ENCODE measurements at regions of chr17 and their contacts with region 1.

Region 1: GRCh38 chr17:9729034-9729650 is 62.2 kb downstream of the DHRS7C start:
- DNase-seq: peak; percentile 78 to 83
- ATAC-seq: peak; percentile 54 to 77; a peak in 4 of 6 replicates
- H3K4me3 ChIP-seq: no peak overlapping the region
- H3K27ac ChIP-seq: peak overlapping the region; percentile 62 to 84
- H3K4me1 ChIP-seq: peaks cover 13% of the 10 kb centered on the region
- CTCF ChIP-seq: peak; percentile 100
- EP300 ChIP-seq: no peak
- POLR2A ChIP-seq: no peak
- RAD21 ChIP-seq: peak; percentile 99 to 100

Region 2: GRCh38 chr17:9575381-9576101 is 153.6 kb before region 1 on chr17 and contains the start of gene STX8:
- CTCF ChIA-PET with region 1: interaction called, 14 read pairs
- POLR2A ChIA-PET with region 1: no interaction called
- DNase-seq: peak; percentile 86 to 94
- ATAC-seq: peak; percentile 89 to 94
- H3K4me3 ChIP-seq: peak within 1 kb of the TSS; percentile 93
- H3K27ac ChIP-seq: peak within 1 kb of the TSS; percentile 88 to 90
- H3K4me1 ChIP-seq: peaks cover 15% of the 10 kb centered on the region
- CTCF ChIP-seq: no peak
- EP300 ChIP-seq: no peak
- POLR2A ChIP-seq: peak; percentile 83
- RAD21 ChIP-seq: 0 out of 5 replicates have a peak, but pooled peaks of 1 of the 2 experiments have one; percentile 16
- polyA plus RNA-seq, gene STX8: 155 and 168 TPM in 2 replicates

Region 3: DNA sequence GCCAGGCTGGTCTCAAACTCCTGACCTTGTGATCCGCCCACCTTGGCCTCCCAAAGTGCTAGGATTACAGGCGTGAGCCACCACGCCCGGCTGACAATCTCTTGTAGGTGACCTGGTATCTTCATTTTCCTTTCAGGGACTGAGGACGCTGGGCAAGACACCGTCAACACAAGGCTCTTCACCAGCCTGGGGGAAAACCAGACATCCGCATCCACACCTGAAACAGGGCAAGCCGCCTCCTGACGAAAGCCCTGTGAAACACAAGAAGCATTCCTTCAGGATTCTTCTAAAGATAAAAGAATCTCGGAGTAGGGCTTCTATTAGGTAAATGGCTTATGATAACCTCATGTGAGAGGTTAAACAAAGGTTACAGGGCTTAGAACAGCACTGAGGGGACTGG is 14.0 kb after region 1 on chr17:
- CTCF ChIA-PET with region 1: interaction called, 13 read pairs
- POLR2A ChIA-PET with region 1: no interaction called
- DNase-seq: no peak
- ATAC-seq: no peak
- H3K4me3 ChIP-seq: no peak overlapping the region
- H3K27ac ChIP-seq: no peak overlapping the region
- H3K4me1 ChIP-seq: no peaks in the 10 kb centered on the region
- CTCF ChIP-seq: no peak
- EP300 ChIP-seq: no peak
- POLR2A ChIP-seq: no peak
- RAD21 ChIP-seq: no peak

Region 4: DNA sequence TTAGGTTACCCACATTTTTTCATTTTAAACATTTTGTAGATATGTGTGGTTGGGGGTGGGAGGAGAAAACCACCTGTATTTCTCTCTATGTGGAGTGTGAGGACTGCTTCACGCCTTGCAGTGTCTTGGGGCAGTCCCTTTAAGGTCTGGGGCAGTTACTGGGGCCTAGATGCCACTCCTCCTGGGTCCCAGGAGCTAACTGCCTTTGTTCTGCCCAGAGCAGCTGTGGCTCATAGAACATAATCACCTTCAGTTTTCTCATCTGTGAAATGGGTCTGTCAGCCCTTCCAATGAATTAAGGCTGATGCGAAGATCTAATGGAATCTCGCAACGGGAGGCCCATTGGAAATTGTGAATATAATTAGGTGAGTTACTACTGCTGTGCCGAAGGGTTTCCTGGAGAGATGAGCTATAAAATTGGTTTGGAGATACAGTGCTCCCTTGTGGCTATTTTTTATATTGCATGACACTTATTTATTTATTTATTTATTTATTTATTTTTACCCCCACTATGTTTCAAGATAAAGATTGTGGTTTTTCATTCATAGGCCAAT is 39.3 kb after region 1 on chr17:
- CTCF ChIA-PET with region 1: interaction called, 22 read pairs
- POLR2A ChIA-PET with region 1: no interaction called
- DNase-seq: peak; percentile 55 to 60
- ATAC-seq: peak in 1 of 2 experiments; percentile 52; a peak in 3 of 6 replicates
- H3K4me3 ChIP-seq: no peak overlapping the region
- H3K27ac ChIP-seq: peak overlapping the region; percentile 43 to 72
- H3K4me1 ChIP-seq: peaks cover 14% of the 10 kb centered on the region; the same call in 2 of the 3 replicates
- CTCF ChIP-seq: peak; percentile 80
- EP300 ChIP-seq: no peak
- POLR2A ChIP-seq: no peak
- RAD21 ChIP-seq: peak; percentile 55 to 74

Region 5: DNA sequence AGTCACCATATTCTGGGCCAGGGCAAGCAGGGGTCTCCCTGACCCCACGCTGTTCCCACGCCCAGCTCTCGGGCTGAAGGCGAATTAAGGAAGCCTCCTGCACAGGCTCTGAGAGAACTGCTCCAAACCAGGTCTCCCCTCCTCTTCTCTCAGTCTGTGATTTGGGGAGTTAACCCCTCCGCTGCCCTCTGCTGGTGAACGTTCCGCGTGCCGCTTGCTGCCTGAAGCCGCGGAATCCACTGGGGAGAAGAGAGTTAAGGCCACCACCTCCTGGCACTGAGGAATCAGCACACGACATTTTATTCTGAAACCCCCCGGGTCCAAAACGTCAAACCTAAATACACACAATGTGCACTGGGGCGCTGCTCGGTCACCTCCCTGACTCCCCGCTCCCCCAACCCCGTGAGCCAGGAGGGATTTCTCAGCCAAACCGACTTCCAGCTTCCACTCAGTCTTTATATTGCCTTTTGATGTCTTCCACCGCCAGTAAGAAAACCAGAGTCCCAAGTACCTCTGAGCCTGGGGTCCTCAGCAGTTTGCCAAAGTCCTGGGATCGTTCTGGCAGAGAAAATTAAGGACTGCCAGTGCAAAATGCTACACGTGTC is 230.3 kb after region 1 on chr17:
- CTCF ChIA-PET with region 1: interaction called, 61 read pairs
- POLR2A ChIA-PET with region 1: no interaction called
- DNase-seq: peak; percentile 74 to 91
- ATAC-seq: peak; percentile 77 to 91
- H3K4me3 ChIP-seq: no peak overlapping the region
- H3K27ac ChIP-seq: peak overlapping the region in 1 of 2 experiments; percentile 26; a peak in 2 of 6 replicates
- H3K4me1 ChIP-seq: peaks cover 4% of the 10 kb centered on the region; the same call in 1 of the 3 replicates
- CTCF ChIP-seq: peak; percentile 85
- EP300 ChIP-seq: no peak
- POLR2A ChIP-seq: no peak
- RAD21 ChIP-seq: peak; percentile 76 to 77

Measured in A549 (cell line).